Vagina (tissue), 2 donors: ENCODE measurements at regions of chr14 and their contacts with region 1.

Region 1: GRCh38 chr14:104707608-104708595 is 16.1 kb upstream of the ADSS1 start:
- DNase-seq: no peak
- H3K4me3 ChIP-seq: no peak overlapping the region
- H3K27ac ChIP-seq: no peak overlapping the region
- H3K4me1 ChIP-seq: peaks cover 6% of the 10 kb centered on the region
- H3K27me3 ChIP-seq: no peaks in the 10 kb centered on the region
- CTCF ChIP-seq: no peak
- POLR2A ChIP-seq: no peak

Region 2: GRCh38 chr14:104650057-104650981 is 57.6 kb before region 1 on chr14:
- intact Hi-C with region 1: loop called (anchors 2 kb)
- DNase-seq: no peak
- H3K4me3 ChIP-seq: peak overlapping the region; percentile 30 to 32
- H3K27ac ChIP-seq: no peak overlapping the region
- H3K4me1 ChIP-seq: peaks cover 10% of the 10 kb centered on the region
- H3K27me3 ChIP-seq: no peaks in the 10 kb centered on the region
- CTCF ChIP-seq: peak; percentile 89 to 98 (median 91)
- POLR2A ChIP-seq: no peak

Region 3: GRCh38 chr14:104752735-104753531 is 45.0 kb after region 1 on chr14 and contains the start of gene SIVA1:
- intact Hi-C with region 1: no loop called
- DNase-seq: peak; percentile 99
- H3K4me3 ChIP-seq: peak within 1 kb of the TSS; percentile 96 to 99
- H3K27ac ChIP-seq: peak within 1 kb of the TSS; percentile 76
- H3K4me1 ChIP-seq: peaks cover 53% of the 10 kb centered on the region
- H3K27me3 ChIP-seq: no peaks in the 10 kb centered on the region
- CTCF ChIP-seq: no peak
- POLR2A ChIP-seq: peak in 1 of 2 donors; percentile 81
- total RNA-seq, gene SIVA1: 284 TPM

Region 4: DNA sequence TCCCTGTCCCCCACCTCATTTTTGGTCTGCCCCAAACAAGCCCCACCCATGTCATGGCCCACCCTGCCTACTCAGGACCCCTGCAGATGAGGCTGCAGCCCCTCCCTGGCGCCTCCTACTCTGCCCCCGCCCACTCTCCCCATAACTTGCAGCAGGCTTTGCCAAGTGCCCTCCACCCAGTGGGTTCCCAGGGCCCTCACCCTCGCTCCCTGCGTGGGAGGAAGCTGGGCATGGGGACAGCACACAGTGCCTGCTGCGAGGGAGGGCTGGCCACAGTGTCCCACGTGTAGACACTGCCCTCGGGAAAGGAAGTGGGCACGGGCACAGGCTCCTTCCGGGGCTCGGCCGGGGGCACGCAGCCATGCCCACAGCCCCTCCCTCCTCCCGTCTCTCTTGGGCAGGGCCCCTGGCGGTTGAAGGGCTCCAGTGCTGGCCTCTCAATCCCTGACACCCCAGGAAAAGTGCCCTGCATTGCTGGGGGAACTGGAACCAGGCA is 78.2 kb after region 1 on chr14:
- intact Hi-C with region 1: no loop called
- DNase-seq: no peak
- H3K4me3 ChIP-seq: no peak overlapping the region
- H3K27ac ChIP-seq: no peak overlapping the region
- H3K4me1 ChIP-seq: peaks cover 50% of the 10 kb centered on the region
- H3K27me3 ChIP-seq: no peaks in the 10 kb centered on the region
- CTCF ChIP-seq: no peak
- POLR2A ChIP-seq: no peak